K562 (cell line): ENCODE measurements at regions of chr19 and their contacts with region 1.

Region 1: GRCh38 chr19:10888421-10888866 is 17.1 kb downstream of the CARM1 start:
- DNase-seq: no peak
- ATAC-seq: no peak
- H3K4me3 ChIP-seq: no peak overlapping the region
- H3K27ac ChIP-seq: no peak overlapping the region
- H3K4me1 ChIP-seq: peaks cover 11 to 52% of the 10 kb centered on the region in 2 experiments; a peak in 4 of 5 replicates
- H3K27me3 ChIP-seq: no peaks in the 10 kb centered on the region; a peak in 1 of 5 replicates
- CTCF ChIP-seq: no peak
- EP300 ChIP-seq: no peak
- POLR2A ChIP-seq: no peak
- RAD21 ChIP-seq: no peak

Region 2: GRCh38 chr19:10864538-10864899 is 23.9 kb before region 1 on chr19:
- CTCF ChIA-PET with region 1: no interaction called
- POLR2A ChIA-PET with region 1: no interaction called
- in situ Hi-C with region 1: no loop called
- intact Hi-C with region 1: no loop called
- DNase-seq: peak; percentile 83 to 92 (median 88)
- ATAC-seq: peak; percentile 91
- H3K4me3 ChIP-seq: no peak overlapping the region
- H3K27ac ChIP-seq: no peak overlapping the region; the same call in 2 of the 3 replicates
- H3K4me1 ChIP-seq: peaks cover 24 to 36% of the 10 kb centered on the region in 2 experiments; a peak in 4 of 5 replicates
- H3K27me3 ChIP-seq: no peaks in the 10 kb centered on the region
- CTCF ChIP-seq: peak; percentile 88 to 97 (median 93)
- EP300 ChIP-seq: no peak
- POLR2A ChIP-seq: no peak
- RAD21 ChIP-seq: peak; percentile 68 to 70

Region 3: DNA sequence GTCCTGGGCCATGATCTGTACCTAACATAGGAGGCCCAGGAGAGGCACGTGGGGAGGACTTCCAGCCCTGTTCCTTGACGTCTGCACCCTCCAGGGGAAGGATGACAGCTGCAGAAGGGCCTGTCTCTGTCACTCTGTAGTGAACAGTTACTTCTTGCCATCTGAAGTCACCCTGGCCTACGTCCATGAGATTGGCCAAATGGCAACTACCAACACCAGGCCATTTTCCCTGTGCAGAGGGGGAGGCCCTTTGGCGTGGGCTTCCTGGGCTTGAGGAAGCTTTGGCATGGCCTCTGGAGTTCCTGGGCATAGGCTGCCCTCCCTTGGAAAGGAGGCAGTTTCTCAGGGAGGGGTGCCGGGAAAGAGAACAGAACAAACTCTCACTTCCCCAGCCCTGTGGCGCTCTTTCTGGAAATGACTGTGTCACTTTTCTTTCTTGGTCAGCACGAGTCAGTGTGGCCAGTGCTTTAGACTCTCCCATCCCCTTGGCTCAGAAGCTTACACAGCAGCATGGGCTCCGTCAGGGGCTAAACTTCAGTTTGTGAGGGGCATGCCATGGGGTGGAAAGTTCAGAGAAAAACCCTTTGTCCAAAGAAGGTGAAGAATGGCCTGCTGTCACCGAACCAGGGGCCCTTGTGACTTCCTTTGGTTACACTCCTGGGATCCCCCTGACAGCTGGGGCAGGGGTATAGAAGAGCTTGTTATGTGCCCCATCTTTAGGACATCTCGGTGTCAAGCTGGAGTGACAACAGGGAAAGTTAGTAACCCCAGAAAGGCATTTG is 11.8 kb before region 1 on chr19:
- CTCF ChIA-PET with region 1: no interaction called
- POLR2A ChIA-PET with region 1: interaction called, 11 read pairs
- in situ Hi-C with region 1: no loop called
- intact Hi-C with region 1: no loop called
- DNase-seq: no peak
- ATAC-seq: no peak
- H3K4me3 ChIP-seq: no peak overlapping the region
- H3K27ac ChIP-seq: peak overlapping the region; percentile 52; the same call in 2 of the 3 replicates
- H3K4me1 ChIP-seq: peaks cover 52 to 58% of the 10 kb centered on the region in 2 experiments
- H3K27me3 ChIP-seq: no peaks in the 10 kb centered on the region
- CTCF ChIP-seq: no peak
- EP300 ChIP-seq: no peak
- POLR2A ChIP-seq: no peak
- RAD21 ChIP-seq: no peak